Activated CD4-positive, alpha-beta memory T cell treated with anti-CD3 and anti-CD28 coated beads for 36 hours (primary cell): ENCODE measurements at regions of chrX and their contacts with region 1.

Region 1: DNA sequence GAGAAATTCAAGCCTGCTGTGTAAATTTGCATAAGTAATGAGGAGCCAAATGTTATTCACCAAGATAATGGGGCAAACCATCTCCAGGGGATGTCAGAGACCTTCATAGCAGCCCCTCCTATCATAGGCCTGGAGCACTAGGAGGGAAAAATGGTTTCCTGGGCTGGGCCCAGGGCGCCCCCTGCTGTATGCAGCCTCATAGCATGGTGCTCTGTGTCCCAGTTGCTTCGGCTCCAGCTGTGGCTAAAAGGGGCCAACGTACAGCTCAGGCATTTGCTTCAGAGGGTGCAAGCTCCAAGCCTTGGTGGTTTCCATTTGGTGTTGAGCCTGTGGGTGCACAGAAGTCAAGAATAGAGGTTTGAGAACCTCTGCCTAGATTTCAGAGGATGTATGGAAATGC is 859.3 kb downstream of the RPA4 start:
- DNase-seq: peak; percentile 26
- H3K4me3 Mint-ChIP-seq: no peak overlapping the region
- H3K27ac Mint-ChIP-seq: no peak overlapping the region
- H3K4me1 Mint-ChIP-seq: no peaks in the 10 kb centered on the region
- H3K27me3 Mint-ChIP-seq: peaks cover 3% of the 10 kb centered on the region

Region 2: DNA sequence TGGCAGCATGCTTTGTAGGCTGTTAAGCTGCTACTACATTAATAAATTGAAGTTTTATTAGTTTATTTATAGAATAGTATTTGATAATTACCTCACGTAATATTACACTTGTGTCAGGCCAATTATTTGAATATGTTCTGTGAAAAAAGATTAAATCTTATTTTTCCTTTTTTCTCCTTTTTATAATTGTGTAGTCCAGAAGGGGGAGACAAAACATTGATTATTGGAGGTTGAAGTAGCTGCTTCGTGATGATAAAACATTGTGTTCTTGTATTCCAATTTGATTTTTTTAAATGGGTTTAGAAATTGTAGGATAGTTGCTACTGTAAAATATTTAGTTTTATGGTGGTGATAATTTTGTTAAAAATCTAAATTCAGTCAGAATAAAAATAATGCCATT is 972.7 kb before region 1 on chrX:
- CTCF ChIA-PET with region 1: no interaction called
- POLR2A ChIA-PET with region 1: no interaction called
- intact Hi-C with region 1: loop called (anchors 10 kb)
- DNase-seq: no peak
- H3K4me3 Mint-ChIP-seq: no peak overlapping the region
- H3K27ac Mint-ChIP-seq: no peak overlapping the region
- H3K4me1 Mint-ChIP-seq: no peaks in the 10 kb centered on the region
- H3K27me3 Mint-ChIP-seq: no peaks in the 10 kb centered on the region

Region 3: DNA sequence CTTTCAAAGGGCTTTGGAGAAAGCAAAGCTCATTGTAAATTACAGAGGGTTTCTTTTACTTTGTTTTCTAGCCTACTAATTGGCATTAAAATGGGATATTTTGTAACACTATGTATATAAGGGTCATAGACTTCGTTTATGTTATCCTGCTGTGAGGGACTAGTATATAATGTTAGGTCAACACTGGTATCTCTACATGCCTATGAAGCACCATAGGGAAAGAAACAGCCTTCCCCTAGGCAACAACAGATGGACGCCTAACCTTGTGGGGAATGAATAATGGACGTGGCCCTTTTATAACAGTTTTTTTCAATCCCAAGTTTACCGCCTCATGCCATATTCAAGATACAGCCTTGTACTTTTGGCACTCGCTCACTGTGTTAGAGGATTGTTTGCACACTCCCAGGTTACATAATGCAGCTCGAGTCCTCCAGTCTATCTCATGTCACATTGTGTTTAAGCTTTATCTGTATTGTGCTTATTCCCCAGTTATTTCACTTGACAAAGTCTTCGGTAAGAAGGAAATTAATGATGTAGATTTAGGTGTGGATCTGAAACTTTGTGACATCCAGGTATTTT is 148.3 kb before region 1 on chrX:
- CTCF ChIA-PET with region 1: no interaction called
- POLR2A ChIA-PET with region 1: no interaction called
- intact Hi-C with region 1: no loop called
- DNase-seq: no peak
- H3K4me3 Mint-ChIP-seq: no peak overlapping the region
- H3K27ac Mint-ChIP-seq: no peak overlapping the region
- H3K4me1 Mint-ChIP-seq: peaks cover 7% of the 10 kb centered on the region
- H3K27me3 Mint-ChIP-seq: no peaks in the 10 kb centered on the region

Region 4: DNA sequence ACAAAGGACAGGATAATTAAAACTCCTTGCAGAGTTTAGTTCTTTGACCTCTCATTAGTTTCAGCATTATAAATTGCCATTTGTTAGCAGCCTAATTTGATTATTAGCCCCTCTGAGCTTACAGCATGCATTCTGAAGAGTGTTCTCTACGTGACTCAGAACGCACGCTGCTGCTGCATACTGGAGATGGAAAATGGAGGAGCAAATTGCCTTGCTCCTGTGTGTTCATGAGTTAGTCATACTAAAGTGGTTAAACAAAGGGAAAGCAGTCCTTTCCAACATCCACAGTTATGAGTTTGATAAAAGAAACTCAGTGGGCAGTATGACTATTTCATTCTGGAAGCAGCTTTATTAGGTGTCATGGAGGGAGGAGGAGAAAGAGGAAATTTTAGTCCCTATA is 63.2 kb after region 1 on chrX:
- CTCF ChIA-PET with region 1: no interaction called
- POLR2A ChIA-PET with region 1: no interaction called
- intact Hi-C with region 1: no loop called
- DNase-seq: no peak
- H3K4me3 Mint-ChIP-seq: no peak overlapping the region
- H3K27ac Mint-ChIP-seq: no peak overlapping the region
- H3K4me1 Mint-ChIP-seq: no peaks in the 10 kb centered on the region
- H3K27me3 Mint-ChIP-seq: no peaks in the 10 kb centered on the region